Mammary epithelial cell (primary cell): ENCODE measurements at regions of chr9 and their contacts with region 1.

Region 1: DNA sequence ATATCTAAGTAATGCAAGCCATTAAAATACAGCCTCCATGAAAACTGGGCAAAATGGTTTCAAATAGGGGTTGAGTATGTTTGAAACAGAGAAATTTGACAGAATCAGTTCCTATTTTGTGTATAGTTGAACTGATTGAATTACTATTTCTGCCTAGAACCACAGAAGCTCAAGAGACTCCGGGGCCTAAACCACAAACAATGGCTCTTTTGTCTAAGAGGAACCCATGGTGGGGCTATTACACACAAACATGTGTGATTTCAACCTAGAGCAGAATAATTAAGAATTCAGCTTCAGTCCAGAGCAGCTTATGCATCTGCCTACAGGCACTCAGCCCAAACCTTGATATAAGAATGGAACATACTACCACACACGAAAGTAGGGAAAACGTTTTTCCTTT is 171.2 kb upstream of the MPDZ start:
- DNase-seq: peak; percentile 20
- H3K4me3 ChIP-seq: no peak overlapping the region
- H3K27ac ChIP-seq: no peak overlapping the region
- H3K4me1 ChIP-seq: no peaks in the 10 kb centered on the region
- H3K27me3 ChIP-seq: no peaks in the 10 kb centered on the region
- CTCF ChIP-seq: no peak

Region 2: GRCh38 chr9:13502484-13502883 is 51.8 kb after region 1 on chr9:
- CTCF ChIA-PET with region 1: no interaction called
- dilution Hi-C with region 1: no loop called
- in situ Hi-C with region 1: no loop called
- intact Hi-C with region 1: no loop called
- DNase-seq: no peak
- H3K4me3 ChIP-seq: no peak overlapping the region
- H3K27ac ChIP-seq: no peak overlapping the region
- H3K4me1 ChIP-seq: no peaks in the 10 kb centered on the region
- H3K27me3 ChIP-seq: no peaks in the 10 kb centered on the region
- CTCF ChIP-seq: no peak

Region 3: GRCh38 chr9:13607481-13608441 is 157.0 kb after region 1 on chr9:
- CTCF ChIA-PET with region 1: no interaction called
- dilution Hi-C with region 1: no loop called
- in situ Hi-C with region 1: no loop called
- intact Hi-C with region 1: loop called (anchors 10 kb)
- DNase-seq: no peak
- H3K4me3 ChIP-seq: peak overlapping the region in 1 of 3 experiments; percentile 7
- H3K27ac ChIP-seq: no peak overlapping the region
- H3K4me1 ChIP-seq: peaks cover 3% of the 10 kb centered on the region
- H3K27me3 ChIP-seq: no peaks in the 10 kb centered on the region
- CTCF ChIP-seq: no peak

Region 4: GRCh38 chr9:13688994-13689600 is 238.4 kb after region 1 on chr9:
- CTCF ChIA-PET with region 1: no interaction called
- dilution Hi-C with region 1: no loop called
- in situ Hi-C with region 1: loop called (anchors 25 kb)
- intact Hi-C with region 1: loop called (anchors 1 kb)
- DNase-seq: peak; percentile 8
- H3K4me3 ChIP-seq: no peak overlapping the region
- H3K27ac ChIP-seq: no peak overlapping the region
- H3K4me1 ChIP-seq: peaks cover 16% of the 10 kb centered on the region
- H3K27me3 ChIP-seq: no peaks in the 10 kb centered on the region
- CTCF ChIP-seq: peak; percentile 48 to 62

Region 5: GRCh38 chr9:14071484-14071883 is 620.8 kb after region 1 on chr9:
- CTCF ChIA-PET with region 1: no interaction called
- dilution Hi-C with region 1: no loop called
- in situ Hi-C with region 1: loop called in 1 of 2 experiments (anchors 25 kb)
- intact Hi-C with region 1: loop called (anchors 10 kb)
- DNase-seq: no peak
- H3K4me3 ChIP-seq: no peak overlapping the region
- H3K27ac ChIP-seq: no peak overlapping the region
- H3K4me1 ChIP-seq: peaks cover 19% of the 10 kb centered on the region
- H3K27me3 ChIP-seq: no peaks in the 10 kb centered on the region
- CTCF ChIP-seq: no peak

Region 6: DNA sequence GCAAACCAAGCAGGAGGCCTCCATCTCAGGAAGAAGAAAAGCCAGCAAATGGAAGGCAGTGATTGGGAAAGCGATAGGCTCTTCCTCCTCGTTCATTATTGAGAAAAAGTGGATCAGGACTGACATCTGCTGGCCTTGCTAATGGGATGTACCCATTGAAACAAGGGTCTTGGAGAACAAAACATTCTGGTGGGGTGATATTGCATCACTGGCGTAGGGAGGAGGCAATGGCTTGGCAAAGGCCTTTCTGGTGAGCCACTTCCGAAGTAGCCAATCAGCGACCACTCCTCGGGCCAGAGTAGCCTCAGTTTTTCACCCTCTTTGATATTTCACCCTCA is 949.9 kb after region 1 on chr9:
- CTCF ChIA-PET with region 1: no interaction called
- dilution Hi-C with region 1: no loop called
- in situ Hi-C with region 1: no loop called
- intact Hi-C with region 1: loop called (anchors 5 kb)
- DNase-seq: peak; percentile 77
- H3K4me3 ChIP-seq: peak overlapping the region in 1 of 3 experiments; percentile 31
- H3K27ac ChIP-seq: no peak overlapping the region
- H3K4me1 ChIP-seq: peaks cover 6% of the 10 kb centered on the region
- H3K27me3 ChIP-seq: peaks cover 5% of the 10 kb centered on the region
- CTCF ChIP-seq: peak; percentile 60 to 66